Right ventricle myocardium inferior (tissue), 1 donor: ENCODE measurements at regions of chr11 and their contacts with region 1.

Region 1: DNA sequence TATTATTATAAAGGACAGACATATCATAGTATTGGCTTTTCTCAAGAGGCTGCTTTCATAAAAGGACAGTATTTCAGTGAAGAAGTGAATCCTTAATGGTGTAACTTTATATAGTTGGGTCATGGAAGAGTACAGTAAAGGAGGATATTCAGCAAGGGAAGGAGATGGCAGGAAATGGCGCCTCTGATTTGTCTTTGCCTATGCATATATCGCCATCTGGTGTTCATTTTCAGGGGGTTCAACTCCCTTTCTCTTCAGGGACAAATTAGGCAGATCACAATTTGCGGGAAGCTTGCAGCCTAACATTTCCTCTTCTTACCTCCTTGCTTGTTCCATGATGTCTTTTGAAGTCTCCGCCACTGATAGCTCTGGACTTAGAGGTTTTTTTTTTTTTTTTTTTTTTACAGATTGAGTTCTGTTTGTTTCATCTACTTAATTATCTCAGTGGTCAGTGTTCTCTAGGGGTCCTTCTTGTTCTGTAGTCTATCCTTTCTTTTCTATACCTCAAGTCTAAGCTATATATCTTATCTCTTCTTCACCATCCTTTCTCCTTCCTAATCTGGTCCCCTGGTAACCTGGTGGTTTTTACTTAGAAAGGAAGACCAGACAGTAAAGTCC is 21.8 kb upstream of the RRM1 start:
- DNase-seq: no peak
- ATAC-seq: peak; percentile 87

Region 2: GRCh38 chr11:3849297-3849874 is 223.4 kb before region 1 on chr11:
- intact Hi-C with region 1: loop called (anchors 1 kb)
- DNase-seq: no peak
- ATAC-seq: peak; percentile 35

Region 3: GRCh38 chr11:3854977-3855807 is 217.6 kb before region 1 on chr11 and contains the start of gene STIM1:
- intact Hi-C with region 1: loop called (anchors 1 kb)
- DNase-seq: peak; percentile 97
- ATAC-seq: peak; percentile 93
- total RNA-seq, gene STIM1: 28.9 TPM

Region 4: GRCh38 chr11:3929649-3930048 is 143.1 kb before region 1 on chr11:
- intact Hi-C with region 1: loop called (anchors 5 kb)
- DNase-seq: no peak
- ATAC-seq: peak; percentile 82

Region 5: DNA sequence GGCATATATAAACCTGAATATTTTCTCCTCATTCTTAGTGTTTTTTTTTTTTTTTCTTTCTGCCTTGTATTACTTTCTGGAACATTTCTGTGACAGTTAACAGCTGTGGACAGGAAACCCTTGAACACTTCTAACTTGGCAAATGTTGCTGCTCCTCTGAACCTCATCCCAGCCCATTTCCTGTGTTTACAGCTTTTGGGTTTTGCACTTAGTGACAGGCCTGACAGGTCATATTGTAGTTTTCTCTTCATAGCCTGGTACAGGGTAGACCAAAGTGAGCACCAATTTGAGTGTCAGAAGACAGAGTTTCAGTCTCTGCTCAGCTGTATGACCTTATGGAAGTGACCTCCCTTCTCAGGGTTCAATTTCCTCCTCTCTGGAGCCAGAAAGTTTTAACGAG is 125.7 kb before region 1 on chr11:
- intact Hi-C with region 1: loop called (anchors 5 kb)
- DNase-seq: no peak
- ATAC-seq: peak; percentile 90

Region 6: DNA sequence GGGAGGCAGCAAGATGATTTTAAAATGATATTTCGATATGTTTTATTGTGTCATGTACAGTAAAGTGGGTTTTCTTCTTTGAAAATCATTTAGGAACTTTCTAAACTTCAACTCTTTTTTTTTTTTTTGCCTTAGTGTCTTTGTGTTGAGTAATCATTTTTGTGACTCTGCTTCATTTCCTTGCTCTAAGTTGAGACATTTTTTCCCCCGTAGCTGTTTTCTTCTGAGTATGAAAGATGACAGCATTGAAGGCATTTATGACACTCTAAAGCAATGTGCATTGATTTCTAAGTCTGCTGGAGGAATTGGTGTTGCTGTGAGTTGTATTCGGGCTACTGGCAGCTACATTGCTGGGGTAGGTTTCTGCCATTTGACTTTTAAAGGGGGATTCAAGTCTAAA is 45.3 kb after region 1 on chr11:
- intact Hi-C with region 1: no loop called
- DNase-seq: no peak
- ATAC-seq: no peak